Activated T-helper 1 cell treated with anti-CD3 and anti-CD28 coated beads, Interleukin-12 subunit alpha, Interleukin-12 subunit beta, Interleukin-2, Interleukin-4 antibody, amounts not matched to agents 30 ng/mL and 10 ng/mL and 1 ng/mL, durations not matched to agents 14 hours and 24 hours and 36 hours (primary cell): ENCODE measurements at regions of chr5 and their contacts with region 1.

Region 1: GRCh38 chr5:53109443-53110127 is at the start of gene MOCS2:
- DNase-seq: peak; percentile 86
- H3K4me3 Mint-ChIP-seq: peak within 1 kb of the TSS; percentile 91
- H3K27ac Mint-ChIP-seq: peak within 1 kb of the TSS; percentile 84
- H3K4me1 Mint-ChIP-seq: peaks cover 31% of the 10 kb centered on the region
- H3K27me3 Mint-ChIP-seq: no peaks in the 10 kb centered on the region
- total RNA-seq, gene MOCS2: 17.9 and 18.4 TPM in 2 replicates

Region 2: GRCh38 chr5:53089345-53089991 is 20.1 kb before region 1 on chr5:
- intact Hi-C with region 1: loop called (anchors 2 kb)
- DNase-seq: no peak
- H3K4me3 Mint-ChIP-seq: peak overlapping the region; percentile 53
- H3K27ac Mint-ChIP-seq: peak overlapping the region; percentile 75
- H3K4me1 Mint-ChIP-seq: peaks cover 54% of the 10 kb centered on the region
- H3K27me3 Mint-ChIP-seq: peaks cover 6% of the 10 kb centered on the region

Region 3: DNA sequence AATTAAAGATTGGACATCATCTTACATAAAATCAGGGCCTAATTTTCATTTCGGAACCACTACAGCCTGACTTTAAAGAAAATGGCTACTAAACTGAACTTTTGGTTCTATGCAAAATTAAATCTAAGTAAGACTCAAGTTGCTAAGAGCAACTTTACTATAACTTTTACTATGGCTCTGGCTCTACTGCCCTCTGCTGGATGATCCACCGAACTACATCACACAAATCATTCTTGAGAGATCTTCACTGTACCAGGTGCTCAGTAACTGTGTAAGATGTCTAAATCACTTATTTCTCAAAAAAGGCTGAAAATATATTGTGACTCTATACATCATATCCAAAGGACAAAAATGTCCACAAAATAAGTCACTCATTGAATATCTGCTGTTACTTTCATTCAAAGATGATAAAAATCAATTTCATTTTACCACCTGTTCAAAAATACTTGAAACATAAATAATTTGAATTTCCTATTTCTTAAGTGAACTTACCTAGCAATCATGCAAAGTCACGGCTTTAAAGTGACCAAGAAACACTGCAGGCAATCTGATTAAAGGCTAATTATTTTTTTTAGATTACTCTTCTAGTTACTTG is 13.6 kb before region 1 on chr5:
- intact Hi-C with region 1: loop called (anchors 1 kb)
- DNase-seq: peak; percentile 56
- H3K4me3 Mint-ChIP-seq: no peak overlapping the region
- H3K27ac Mint-ChIP-seq: no peak overlapping the region
- H3K4me1 Mint-ChIP-seq: peaks cover 17% of the 10 kb centered on the region
- H3K27me3 Mint-ChIP-seq: no peaks in the 10 kb centered on the region

Region 4: DNA sequence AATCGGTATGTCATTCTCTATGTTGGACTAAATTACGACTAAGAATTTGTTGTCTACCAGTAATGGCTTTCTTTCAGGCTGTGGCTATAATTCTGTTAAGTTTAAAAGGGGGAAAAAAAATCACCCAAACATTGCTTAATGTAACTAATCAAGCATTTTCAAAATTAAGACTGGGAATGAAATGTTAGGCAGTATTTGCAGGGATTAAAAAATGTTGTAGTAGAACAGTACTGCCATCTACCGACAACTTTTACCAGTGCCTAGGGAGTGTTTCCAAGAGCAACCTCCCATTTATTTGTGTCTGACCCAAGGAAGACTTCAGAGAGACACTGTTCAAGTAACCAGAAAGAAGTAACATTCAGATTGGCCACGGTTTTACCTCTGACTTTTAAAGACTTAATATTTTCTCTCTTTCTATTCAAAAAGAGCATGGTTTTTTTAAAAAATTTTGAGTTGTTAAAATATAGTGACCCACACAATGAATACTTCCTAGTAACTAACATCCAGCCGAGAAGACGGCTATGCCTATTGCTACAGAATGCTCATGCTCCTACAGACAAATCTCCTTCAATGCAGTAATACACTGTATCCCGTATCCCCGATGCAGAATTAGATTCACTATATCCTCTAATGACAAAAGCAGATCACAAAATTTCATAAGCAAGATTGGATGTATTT is 1108.4 kb after region 1 on chr5:
- intact Hi-C with region 1: loop called (anchors 10 kb)
- DNase-seq: no peak
- H3K4me3 Mint-ChIP-seq: no peak overlapping the region
- H3K27ac Mint-ChIP-seq: no peak overlapping the region
- H3K4me1 Mint-ChIP-seq: no peaks in the 10 kb centered on the region
- H3K27me3 Mint-ChIP-seq: no peaks in the 10 kb centered on the region